Head of caudate nucleus (tissue), 42 donors: ENCODE measurements at regions of chr12 and their contacts with region 1.

Region 1: DNA sequence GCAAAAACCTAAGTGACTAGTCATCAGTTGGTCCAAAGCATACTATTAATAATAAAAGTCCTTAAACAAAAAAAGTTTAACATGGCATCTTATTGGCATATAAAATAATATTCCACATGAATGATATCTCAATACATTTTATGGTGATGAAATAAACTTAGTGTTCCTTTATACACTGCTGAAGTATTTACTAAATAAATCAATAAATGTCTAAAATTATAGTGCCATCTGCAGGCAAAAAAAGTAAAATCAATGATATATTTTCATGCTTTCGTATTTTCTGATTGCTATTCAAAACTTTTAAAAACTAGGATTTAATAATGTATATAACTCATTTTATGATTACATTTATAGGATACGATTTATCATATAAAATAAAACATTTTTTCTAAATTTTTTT is 30.5 kb downstream of the PUS7L start:
- DNase-seq: no peak

Region 2: DNA sequence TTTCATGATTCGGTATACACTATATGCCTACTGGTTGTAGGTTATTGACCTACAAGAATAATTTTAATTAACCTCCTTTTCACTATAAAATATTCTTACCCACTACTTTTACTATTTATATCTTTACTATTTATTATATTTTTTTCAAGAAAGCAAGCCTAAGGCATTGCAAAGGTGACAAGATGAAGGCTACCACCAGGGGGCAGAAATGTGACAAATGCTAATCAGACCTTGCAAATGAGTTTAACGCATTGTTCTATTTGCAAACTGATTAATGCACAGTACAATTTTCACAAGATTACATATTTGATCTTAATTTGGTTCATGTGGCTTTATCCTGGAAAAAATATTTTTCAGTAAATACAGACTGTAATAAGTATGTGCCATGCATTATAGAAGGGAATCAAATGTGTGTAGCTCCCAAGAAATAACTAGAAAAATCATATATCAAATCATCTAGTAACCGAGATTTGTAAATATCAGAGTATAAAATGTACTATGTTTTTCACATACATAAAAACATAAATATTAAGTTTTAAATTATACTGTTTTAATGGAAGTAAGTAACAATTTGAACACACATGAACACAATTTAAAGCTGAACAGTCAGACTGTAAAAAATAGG is 283.1 kb before region 1 on chr12:
- intact Hi-C with region 1: loop called (anchors 10 kb)
- DNase-seq: peak in 39 of 42 donors; percentile 6 to 86 (median 65)